ENCODE measurements at regions of chr15 and their contacts with region 1.

Region 1: DNA sequence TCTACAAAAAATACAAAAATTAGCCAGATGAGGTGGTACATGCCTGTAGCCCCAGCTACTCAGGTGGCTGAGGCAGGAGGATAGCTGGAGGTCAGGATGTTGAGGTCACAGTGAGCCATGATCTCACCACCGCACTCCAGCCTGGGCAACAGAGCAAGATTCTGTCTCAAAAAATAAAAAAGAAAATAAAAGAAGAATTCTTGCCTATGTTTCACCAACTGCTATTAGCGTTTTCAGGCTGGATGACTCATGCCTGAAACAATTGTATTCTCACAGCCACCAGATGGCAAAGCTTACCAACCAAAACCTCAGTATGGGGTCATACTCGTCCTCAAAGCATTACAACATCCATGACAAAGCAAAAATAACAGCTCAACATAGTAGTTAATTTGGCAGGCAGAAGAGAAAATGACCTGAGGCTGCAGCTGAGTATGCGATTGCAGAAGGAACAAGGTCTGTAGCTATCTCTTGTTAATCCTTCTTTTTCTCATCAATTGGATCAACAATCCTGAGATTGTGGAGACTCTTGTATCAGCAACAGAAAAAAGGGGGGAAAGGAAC is 52.2 kb downstream of the TP53BP1 start:
- DNase-seq: peak; percentile 92

Region 2: GRCh38 chr15:43749690-43750345 is 309.0 kb after region 1 on chr15:
- in situ Hi-C with region 1: loop called (anchors 10 kb)
- DNase-seq: no peak